Activated T-helper 2 cell treated with anti-CD3 and anti-CD28 coated beads, Interferon-gamma antibody, Interleukin-2, Interleukin-4, amounts not matched to agents 10 μg/mL and 5 μg/mL and 100 μg/mL, durations not matched to agents 14 hours and 24 hours and 36 hours (primary cell): ENCODE measurements at regions of chr12 and their contacts with region 1.

Region 1: DNA sequence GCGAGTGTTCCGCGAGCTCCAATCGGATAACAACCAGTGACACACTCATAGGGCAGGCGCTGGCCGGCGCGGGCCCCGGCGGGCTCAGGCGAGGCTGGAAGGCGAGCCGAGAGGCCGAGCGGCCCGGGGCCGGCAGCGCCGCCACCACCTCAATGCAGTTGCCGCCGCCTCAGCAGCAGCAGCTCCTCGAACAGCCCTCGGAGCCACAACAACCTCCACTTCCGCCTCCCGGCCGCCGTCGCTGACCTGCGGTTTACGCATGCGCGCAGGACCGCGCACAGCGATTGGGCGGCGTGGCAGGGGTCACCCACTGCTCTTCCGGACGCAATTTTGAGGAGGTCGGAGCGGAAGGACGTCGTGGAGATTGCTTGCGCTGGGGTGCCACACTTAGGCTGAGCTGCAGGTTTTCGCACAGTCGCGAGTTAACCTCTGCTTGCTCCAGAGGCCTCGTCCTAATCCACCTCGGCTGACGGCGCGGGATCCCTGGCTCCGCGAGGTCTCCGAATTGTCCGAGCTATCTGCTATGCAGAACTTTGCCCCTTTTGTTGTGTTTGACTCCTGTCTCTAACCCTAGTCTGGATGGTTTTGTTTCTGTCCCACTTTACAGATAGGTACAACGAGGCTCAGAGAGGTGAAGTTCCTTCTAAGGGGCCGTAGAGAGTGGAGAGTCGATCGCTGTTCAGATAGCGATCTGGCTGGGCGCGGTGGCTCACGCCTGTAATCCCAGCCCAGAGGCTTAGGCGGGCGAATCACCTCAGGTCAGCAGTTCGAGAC is at the starts of genes ACAD10 and BRAP:
- DNase-seq: peak; percentile 95
- H3K4me3 Mint-ChIP-seq: peak within 1 kb of the TSS; percentile 95
- H3K27ac Mint-ChIP-seq: peak within 1 kb of the TSS; percentile 93
- H3K4me1 Mint-ChIP-seq: peaks cover 29% of the 10 kb centered on the region
- H3K27me3 Mint-ChIP-seq: no peaks in the 10 kb centered on the region
- total RNA-seq, gene ACAD10: 25.4 and 32.6 TPM in 2 replicates
- total RNA-seq, gene BRAP: 18.5 and 19.3 TPM in 2 replicates

Region 2: DNA sequence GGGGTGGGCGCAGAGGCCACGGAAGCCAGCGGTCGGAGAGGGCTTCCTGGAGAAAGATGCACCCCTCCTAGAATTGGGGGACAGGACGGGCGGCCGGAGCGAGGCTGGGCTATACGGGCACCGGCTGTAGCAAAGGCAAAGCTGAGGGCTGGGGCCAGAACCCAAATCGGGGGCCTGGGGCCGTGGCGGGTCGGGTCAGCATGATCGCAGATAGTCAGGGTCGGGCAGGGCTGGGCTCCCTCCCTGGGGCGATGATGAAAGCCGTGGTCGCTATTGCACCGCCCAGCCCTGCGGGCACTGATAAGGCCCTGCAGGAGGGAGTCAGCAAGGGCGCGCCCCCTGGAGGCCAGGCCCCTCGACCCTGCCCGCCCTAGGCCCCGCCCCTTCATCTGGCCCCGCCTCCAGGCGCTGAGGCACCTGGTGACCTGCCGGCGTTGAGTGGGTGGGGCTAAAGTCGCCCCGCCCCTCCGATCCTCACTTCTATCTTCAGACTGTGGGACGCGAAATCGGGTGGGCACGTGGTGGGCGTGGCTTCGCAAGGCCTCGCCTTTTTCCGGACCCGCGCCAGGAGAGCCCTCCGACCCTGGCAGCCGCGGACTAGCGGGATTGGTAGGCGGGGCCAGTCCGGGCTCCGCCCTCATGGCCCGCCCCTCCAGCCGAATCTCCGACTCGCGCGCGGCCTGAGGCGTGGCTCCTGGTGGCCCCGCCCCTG is 280.6 kb before region 1 on chr12:
- intact Hi-C with region 1: loop called (anchors 5 kb)
- DNase-seq: peak; percentile 96
- H3K4me3 Mint-ChIP-seq: peak overlapping the region; percentile 84
- H3K27ac Mint-ChIP-seq: peak overlapping the region; percentile 95
- H3K4me1 Mint-ChIP-seq: peaks cover 49% of the 10 kb centered on the region
- H3K27me3 Mint-ChIP-seq: peaks cover 1% of the 10 kb centered on the region

Region 3: GRCh38 chr12:111444925-111445725 is 240.8 kb before region 1 on chr12:
- intact Hi-C with region 1: loop called (anchors 10 kb)
- DNase-seq: peak; percentile 86
- H3K4me3 Mint-ChIP-seq: peak overlapping the region; percentile 22
- H3K27ac Mint-ChIP-seq: peak overlapping the region; percentile 79
- H3K4me1 Mint-ChIP-seq: peaks cover 79% of the 10 kb centered on the region
- H3K27me3 Mint-ChIP-seq: no peaks in the 10 kb centered on the region

Region 4: GRCh38 chr12:111599459-111600204 is 86.3 kb before region 1 on chr12:
- intact Hi-C with region 1: loop called (anchors 5 kb)
- DNase-seq: peak; percentile 83
- H3K4me3 Mint-ChIP-seq: peak overlapping the region; percentile 89
- H3K27ac Mint-ChIP-seq: peak overlapping the region; percentile 89
- H3K4me1 Mint-ChIP-seq: peaks cover 19% of the 10 kb centered on the region
- H3K27me3 Mint-ChIP-seq: peaks cover under 1% of the 10 kb centered on the region

Region 5: DNA sequence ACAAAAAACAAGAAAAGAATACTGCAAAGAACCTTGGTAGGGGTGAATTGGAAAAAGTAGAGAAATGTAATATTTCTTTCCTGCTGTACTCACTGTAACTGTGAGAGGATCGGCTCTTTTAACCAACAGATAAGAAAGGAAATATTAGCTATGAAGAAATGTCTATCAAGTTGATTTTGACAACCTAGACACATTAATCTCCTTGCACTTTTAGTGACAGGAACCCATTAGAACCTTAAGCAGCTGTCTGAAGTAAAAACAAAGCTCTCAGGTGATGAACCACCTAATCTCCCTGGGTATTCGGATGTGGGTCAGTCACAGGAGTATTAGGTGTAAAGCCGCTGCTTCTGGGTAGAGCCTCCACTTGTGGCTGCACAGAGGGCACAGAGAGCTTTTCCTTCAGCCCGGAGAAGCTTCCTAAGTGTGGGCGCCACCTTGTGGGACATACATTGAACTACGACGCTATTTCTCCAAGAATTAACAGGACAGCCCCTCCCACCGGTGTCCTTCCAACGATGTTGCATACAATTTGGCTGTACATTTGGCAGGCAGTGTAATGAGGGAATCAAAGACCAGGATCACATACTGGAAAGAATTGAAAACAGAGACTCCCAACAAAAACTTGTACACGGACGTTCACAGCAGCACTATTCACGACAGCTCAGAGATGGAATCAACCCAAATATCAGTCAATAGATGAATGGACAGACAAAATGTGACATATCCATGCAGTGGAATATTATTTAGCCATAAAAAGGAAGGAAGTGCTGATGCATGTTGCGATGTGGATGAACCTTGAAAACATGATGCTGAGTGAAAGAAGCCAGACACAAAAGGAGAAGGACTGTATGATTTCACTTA is 127.2 kb after region 1 on chr12:
- intact Hi-C with region 1: loop called (anchors 1 kb)
- DNase-seq: peak; percentile 56
- H3K4me3 Mint-ChIP-seq: no peak overlapping the region
- H3K27ac Mint-ChIP-seq: no peak overlapping the region
- H3K4me1 Mint-ChIP-seq: peaks cover 6% of the 10 kb centered on the region
- H3K27me3 Mint-ChIP-seq: peaks cover 4% of the 10 kb centered on the region

Region 6: GRCh38 chr12:111841750-111842555 is 156.0 kb after region 1 on chr12 and contains the start of gene MAPKAPK5:
- intact Hi-C with region 1: loop called (anchors 10 kb)
- DNase-seq: peak; percentile 95
- H3K4me3 Mint-ChIP-seq: peak within 1 kb of the TSS; percentile 97
- H3K27ac Mint-ChIP-seq: peak within 1 kb of the TSS; percentile 98
- H3K4me1 Mint-ChIP-seq: peaks cover 36% of the 10 kb centered on the region
- H3K27me3 Mint-ChIP-seq: no peaks in the 10 kb centered on the region
- total RNA-seq, gene MAPKAPK5: 66.4 and 68.1 TPM in 2 replicates

Region 7: DNA sequence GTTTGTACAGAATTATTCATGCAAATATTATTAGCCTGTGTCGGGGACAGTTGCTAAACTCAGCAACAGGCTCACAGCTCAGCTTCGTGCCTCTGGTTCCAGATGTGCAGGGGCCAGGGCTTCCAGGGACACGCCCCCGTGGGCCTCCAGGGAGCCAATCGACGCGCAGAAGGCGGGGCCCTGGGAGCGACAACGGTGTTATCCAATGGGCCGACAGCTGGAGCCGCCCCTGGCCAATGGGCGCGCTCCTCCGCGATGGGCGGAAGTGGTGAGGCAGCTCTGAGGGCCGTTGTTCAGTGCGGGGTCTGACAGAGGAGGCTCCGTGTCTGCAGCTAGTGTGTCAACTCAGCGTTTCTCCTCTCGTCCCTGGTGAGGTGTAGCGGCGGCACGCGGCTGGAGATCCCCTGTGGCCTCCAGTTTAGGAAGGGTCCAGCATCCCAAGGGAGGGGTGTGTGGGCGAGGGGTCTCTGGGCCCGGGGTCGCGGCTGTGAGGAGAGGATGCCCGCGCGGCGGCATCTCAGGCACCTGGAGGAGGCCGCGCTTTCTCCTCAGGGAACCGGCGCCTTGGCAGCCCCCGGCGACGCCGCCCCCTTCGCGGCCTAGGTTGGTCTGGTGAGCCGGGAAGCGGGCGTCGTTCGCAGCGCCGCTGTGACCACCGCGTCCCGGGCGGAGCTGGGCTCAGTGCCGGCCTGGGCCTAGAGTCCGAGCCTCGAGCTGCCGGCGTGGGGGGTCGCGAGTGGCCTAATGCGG is 439.5 kb after region 1 on chr12 and contains the start of gene TRAFD1:
- intact Hi-C with region 1: loop called (anchors 5 kb)
- DNase-seq: peak; percentile 99
- H3K4me3 Mint-ChIP-seq: peak within 1 kb of the TSS; percentile 88
- H3K27ac Mint-ChIP-seq: peak within 1 kb of the TSS; percentile 81
- H3K4me1 Mint-ChIP-seq: peaks cover 33% of the 10 kb centered on the region
- H3K27me3 Mint-ChIP-seq: peaks cover 4% of the 10 kb centered on the region
- total RNA-seq, gene TRAFD1: 34.7 and 37.5 TPM in 2 replicates